Prostate gland (tissue), 2 donors: ENCODE measurements at regions of chr2 and their contacts with region 1.

Region 1: GRCh38 chr2:28137221-28137620 is 246.7 kb downstream of the BABAM2 start:
- DNase-seq: peak; percentile 80
- H3K4me3 ChIP-seq: no peak overlapping the region
- H3K27ac ChIP-seq: peak overlapping the region; percentile 15 to 62
- H3K4me1 ChIP-seq: peaks cover 4% of the 10 kb centered on the region
- H3K27me3 ChIP-seq: no peaks in the 10 kb centered on the region
- CTCF ChIP-seq: no peak
- POLR2A ChIP-seq: no peak

Region 2: GRCh38 chr2:27890146-27890923 is 246.9 kb before region 1 on chr2 and contains the starts of genes BABAM2 and RBKS:
- intact Hi-C with region 1: loop called (anchors 10 kb)
- DNase-seq: peak; percentile 85
- H3K4me3 ChIP-seq: peak within 1 kb of the TSS; percentile 69 to 73
- H3K27ac ChIP-seq: peak within 1 kb of the TSS; percentile 93 to 96
- H3K4me1 ChIP-seq: no peaks in the 10 kb centered on the region
- H3K27me3 ChIP-seq: no peaks in the 10 kb centered on the region
- CTCF ChIP-seq: no peak
- POLR2A ChIP-seq: peak; percentile 63
- total RNA-seq, gene BABAM2: 35.8 to 37.3 TPM
- total RNA-seq, gene RBKS: 1.6 to 1.8 TPM